Ovary (tissue), 10 donors: ENCODE measurements at regions of chr5 and their contacts with region 1.

Region 1: DNA sequence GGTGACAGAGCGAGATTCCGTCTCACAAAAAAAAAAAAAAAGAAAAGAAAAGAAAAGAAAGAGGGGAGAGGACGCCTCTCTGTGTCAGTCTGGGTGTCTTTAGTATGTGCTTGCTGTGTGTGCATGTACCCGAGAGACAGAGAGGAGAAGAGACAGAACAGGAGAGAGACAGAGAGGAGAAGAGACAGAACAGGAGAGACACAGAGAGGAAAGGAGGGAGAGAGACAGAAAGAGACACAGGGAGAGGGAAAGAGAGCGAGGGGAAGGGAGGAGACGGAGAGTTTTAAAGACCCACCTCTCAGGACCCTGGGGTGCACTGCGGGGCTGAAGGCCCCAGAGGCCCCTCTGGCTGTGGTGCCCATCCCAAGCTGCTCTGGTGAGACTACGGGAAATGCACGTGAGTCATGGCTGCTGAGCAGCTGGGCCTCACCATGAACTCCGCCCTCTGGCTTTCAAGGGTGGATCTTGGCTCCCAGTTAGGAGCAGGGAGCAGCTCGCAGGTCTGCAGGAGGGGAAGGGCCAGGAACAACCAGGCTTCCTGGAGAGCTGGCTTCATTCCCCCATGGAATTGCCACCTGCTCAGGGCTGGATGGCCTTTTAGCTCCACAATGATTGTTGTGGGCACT is 7.9 kb downstream of the SLC6A3 start:
- DNase-seq: no peak
- H3K4me3 ChIP-seq: no peak overlapping the region
- H3K27ac ChIP-seq: no peak overlapping the region
- H3K4me1 ChIP-seq: no peaks in the 10 kb centered on the region
- H3K27me3 ChIP-seq: no peaks in the 10 kb centered on the region
- CTCF ChIP-seq: no peak
- EP300 ChIP-seq: no peak
- POLR2A ChIP-seq: no peak

Region 2: DNA sequence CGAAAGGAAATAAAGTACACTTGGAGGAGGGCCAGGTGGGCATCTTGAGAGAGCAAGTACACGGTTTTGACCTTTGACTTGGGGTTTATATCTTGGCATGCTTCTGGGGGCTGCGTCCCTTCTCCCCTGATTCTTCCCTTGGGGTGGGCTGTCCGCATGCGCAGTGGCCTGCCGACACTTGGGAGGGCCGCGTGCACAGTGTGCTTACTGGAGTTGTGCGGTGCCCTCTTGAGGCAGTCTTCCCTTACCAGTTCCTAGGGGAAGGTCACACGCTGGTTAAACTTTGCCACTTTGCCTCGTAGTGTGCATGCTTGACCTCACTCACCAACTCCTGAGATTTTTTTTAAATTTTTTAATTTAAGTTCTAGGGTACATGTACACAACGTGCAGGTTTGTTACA is 88.1 kb before region 1 on chr5:
- intact Hi-C with region 1: no loop called
- DNase-seq: no peak
- H3K4me3 ChIP-seq: no peak overlapping the region
- H3K27ac ChIP-seq: no peak overlapping the region
- H3K4me1 ChIP-seq: peaks cover 7% of the 10 kb centered on the region
- H3K27me3 ChIP-seq: no peaks in the 10 kb centered on the region
- CTCF ChIP-seq: no peak
- EP300 ChIP-seq: no peak
- POLR2A ChIP-seq: no peak

Region 3: DNA sequence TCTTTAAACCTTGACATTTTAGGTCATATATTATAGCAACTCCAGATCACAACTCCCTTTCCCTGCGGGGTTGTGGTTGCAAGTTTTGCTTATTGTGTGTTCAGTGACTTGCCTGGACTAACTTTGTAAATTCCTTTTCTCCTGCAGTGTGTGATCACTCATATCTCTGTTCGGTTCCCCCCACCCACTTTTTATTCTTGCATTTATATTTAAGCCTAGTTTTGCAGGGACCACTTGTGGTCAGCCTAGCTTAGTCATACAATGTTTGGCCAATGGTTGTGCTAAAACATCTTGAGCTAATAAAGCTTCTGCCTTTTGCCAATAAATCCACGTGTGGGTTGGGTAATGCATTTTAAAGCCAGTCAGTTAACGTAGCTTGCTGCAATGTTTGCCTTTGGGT is 591.9 kb after region 1 on chr5:
- intact Hi-C with region 1: loop called in 1 of 4 experiments (anchors 10 kb)
- DNase-seq: no peak
- H3K4me3 ChIP-seq: no peak overlapping the region
- H3K27ac ChIP-seq: no peak overlapping the region
- H3K4me1 ChIP-seq: no peaks in the 10 kb centered on the region
- H3K27me3 ChIP-seq: no peaks in the 10 kb centered on the region
- CTCF ChIP-seq: no peak
- EP300 ChIP-seq: no peak
- POLR2A ChIP-seq: no peak